Endothelial cell of umbilical vein (primary cell): ENCODE measurements at regions of chr2 and their contacts with region 1.

Region 1: DNA sequence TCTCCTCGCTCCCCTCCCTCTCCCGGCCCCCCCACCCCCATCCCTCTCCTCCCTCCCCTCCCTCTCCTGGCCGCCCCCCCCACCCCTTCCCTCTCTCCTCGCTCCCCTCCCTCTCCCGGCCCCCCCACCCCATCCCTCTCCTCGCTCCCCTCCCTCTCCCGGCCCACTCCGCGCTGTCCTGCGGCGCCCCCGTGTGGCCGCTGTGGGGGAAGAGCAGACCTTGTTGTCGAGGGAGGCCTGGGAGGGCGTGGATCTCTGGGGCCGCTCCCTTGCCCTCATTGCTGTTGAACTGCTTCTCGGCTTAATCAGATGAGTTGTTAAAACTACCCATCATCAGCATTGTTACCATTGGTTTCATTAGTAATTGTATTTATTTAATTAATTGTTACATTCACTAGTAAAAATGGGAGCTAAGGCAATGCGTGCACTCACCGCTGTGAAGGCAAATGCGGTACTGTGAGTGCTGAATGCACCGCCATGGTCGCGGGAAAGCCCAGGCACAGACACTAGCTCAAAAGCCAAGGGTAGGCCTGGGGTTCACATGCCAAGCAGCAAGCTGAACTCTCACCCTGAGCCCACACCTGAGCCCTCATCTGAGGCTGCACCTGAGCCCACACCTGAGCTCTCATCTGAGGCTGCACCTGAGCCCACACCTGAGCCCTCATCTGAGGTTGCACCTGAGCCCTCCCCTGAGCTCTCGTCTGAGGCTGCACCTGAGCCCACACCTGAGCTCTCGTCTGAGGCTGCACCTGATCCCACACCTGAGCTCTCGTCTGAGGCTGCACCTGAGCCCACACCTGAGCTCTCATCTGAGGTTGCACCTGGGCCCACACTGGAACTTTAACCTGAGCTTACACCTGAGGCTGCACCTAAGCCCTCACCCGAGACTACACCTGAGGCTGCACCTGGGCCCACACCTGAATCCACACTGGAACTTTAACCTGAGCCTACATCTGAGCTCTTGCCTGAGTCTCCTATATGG is 8.8 kb downstream of the RTP5 start:
- DNase-seq: peak; percentile 49
- H3K4me3 ChIP-seq: no peak overlapping the region
- H3K27ac ChIP-seq: no peak overlapping the region
- H3K4me1 ChIP-seq: peaks cover 3% of the 10 kb centered on the region
- H3K27me3 ChIP-seq: no peaks in the 10 kb centered on the region
- CTCF ChIP-seq: peak; percentile 48 to 86
- POLR2A ChIP-seq: no peak

Region 2: GRCh38 chr2:241659150-241659739 is 219.0 kb before region 1 on chr2:
- CTCF ChIA-PET with region 1: interaction called, 10 read pairs
- POLR2A ChIA-PET with region 1: no interaction called
- dilution Hi-C with region 1: no loop called
- intact Hi-C with region 1: no loop called
- DNase-seq: peak; percentile 71
- H3K4me3 ChIP-seq: no peak overlapping the region
- H3K27ac ChIP-seq: no peak overlapping the region
- H3K4me1 ChIP-seq: no peaks in the 10 kb centered on the region
- H3K27me3 ChIP-seq: no peaks in the 10 kb centered on the region
- CTCF ChIP-seq: peak; percentile 60 to 70
- POLR2A ChIP-seq: no peak

Region 3: DNA sequence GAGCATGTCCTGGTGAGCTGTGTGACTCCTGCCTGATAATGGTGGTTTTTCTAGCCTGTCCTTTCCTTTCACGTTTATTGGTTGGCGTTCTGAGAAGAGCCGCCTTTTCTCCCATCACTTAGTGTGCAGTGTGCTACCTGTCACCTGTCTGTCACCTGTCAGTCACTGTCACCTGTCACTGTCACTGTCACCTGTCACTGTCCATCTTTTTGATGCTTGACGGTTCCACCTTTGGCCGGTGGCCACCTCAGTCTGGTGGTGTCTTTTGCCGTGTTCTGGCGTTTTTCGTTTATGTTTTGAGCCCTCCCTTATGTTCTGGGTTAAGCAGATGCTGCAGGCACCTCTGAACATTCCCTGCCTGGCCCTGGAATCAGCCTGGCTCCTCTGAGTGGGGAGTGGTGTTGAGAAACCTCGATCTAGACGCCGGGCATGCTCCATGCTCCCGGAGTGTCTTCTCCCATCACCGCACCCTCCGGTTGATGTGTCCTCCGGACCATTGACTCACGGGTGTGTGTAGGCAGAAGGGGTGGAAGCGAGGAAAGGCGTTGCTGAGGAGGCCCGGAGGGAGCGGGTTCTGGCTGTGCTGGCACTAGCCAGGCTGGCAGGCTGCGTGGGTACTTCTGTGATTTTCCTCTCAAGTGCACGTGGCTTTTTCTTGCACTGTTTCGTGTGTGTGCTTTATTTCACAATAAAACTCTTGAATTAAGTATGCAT is 212.4 kb before region 1 on chr2:
- CTCF ChIA-PET with region 1: interaction called, 8 read pairs
- POLR2A ChIA-PET with region 1: no interaction called
- dilution Hi-C with region 1: no loop called
- intact Hi-C with region 1: loop called (anchors 1 kb)
- DNase-seq: no peak
- H3K4me3 ChIP-seq: no peak overlapping the region
- H3K27ac ChIP-seq: peak overlapping the region; percentile 21
- H3K4me1 ChIP-seq: peaks cover 20% of the 10 kb centered on the region
- H3K27me3 ChIP-seq: no peaks in the 10 kb centered on the region
- CTCF ChIP-seq: no peak
- POLR2A ChIP-seq: no peak

Region 4: GRCh38 chr2:241686649-241687425 is 191.4 kb before region 1 on chr2 and contains the start of gene DTYMK:
- CTCF ChIA-PET with region 1: interaction called, 3 read pairs
- POLR2A ChIA-PET with region 1: no interaction called
- dilution Hi-C with region 1: no loop called
- intact Hi-C with region 1: loop called (anchors 1 kb)
- DNase-seq: peak; percentile 96
- H3K4me3 ChIP-seq: peak within 1 kb of the TSS; percentile 90 to 93 (median 92)
- H3K27ac ChIP-seq: peak within 1 kb of the TSS; percentile 75
- H3K4me1 ChIP-seq: peaks cover 13% of the 10 kb centered on the region
- H3K27me3 ChIP-seq: no peaks in the 10 kb centered on the region
- CTCF ChIP-seq: no peak
- POLR2A ChIP-seq: peak; percentile 91
- total RNA-seq, gene DTYMK: 91.9 and 104 TPM in 2 replicates

Region 5: DNA sequence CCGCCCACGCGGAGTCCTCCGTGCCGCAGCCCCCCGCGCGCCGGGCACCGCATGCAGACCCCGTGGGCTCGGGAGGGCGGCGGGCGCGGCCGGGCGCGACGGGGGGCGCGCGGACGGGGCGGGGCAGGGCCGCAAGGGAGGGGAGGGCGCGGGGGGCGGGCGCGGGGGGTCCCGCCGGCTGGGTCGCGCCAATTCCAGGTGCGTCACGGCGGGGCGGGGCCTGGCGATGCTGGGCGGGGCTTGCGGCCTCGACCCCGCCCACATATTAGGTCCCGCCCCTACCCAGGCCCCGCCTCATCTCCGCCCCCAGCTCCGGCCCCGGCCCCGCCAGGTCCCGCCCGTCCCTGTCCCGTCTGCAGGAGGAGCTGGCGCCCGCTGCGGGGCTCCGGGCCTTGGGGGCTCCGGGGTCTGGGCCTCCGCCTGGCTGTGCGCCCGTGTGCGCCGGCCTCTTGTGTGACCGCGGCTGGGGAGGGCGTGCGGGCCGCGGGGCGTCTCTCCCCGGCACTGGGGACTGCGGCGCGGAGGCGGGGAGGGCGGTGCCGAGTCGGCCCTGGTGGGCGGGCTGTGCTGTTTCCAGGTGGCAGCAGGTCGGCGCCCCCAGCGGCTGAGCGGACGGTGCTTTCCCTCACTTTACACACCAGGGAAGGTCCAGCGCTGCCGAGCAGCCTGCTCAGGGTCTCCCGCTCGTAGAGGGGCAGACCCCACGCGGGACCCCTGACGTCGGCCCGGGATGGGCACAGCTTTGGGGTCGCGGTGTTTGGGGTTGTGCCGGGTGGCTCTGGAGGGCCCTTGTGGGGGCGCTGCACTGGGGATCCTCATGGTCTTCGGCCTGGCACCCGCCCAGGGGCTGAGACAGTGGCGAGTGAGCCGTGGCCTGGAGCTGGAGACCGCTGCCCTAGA is 175.9 kb before region 1 on chr2:
- CTCF ChIA-PET with region 1: interaction called, 8 read pairs
- POLR2A ChIA-PET with region 1: no interaction called
- dilution Hi-C with region 1: no loop called
- intact Hi-C with region 1: loop called (anchors 1 kb)
- DNase-seq: peak; percentile 82
- H3K4me3 ChIP-seq: peak overlapping the region; percentile 49 to 75 (median 64)
- H3K27ac ChIP-seq: peak overlapping the region; percentile 15
- H3K4me1 ChIP-seq: peaks cover 6% of the 10 kb centered on the region
- H3K27me3 ChIP-seq: no peaks in the 10 kb centered on the region
- CTCF ChIP-seq: peak; percentile 45 to 56
- POLR2A ChIP-seq: no peak